Left lung (tissue), 14 donors: ENCODE measurements at regions of chr10 and their contacts with region 1.

Region 1: DNA sequence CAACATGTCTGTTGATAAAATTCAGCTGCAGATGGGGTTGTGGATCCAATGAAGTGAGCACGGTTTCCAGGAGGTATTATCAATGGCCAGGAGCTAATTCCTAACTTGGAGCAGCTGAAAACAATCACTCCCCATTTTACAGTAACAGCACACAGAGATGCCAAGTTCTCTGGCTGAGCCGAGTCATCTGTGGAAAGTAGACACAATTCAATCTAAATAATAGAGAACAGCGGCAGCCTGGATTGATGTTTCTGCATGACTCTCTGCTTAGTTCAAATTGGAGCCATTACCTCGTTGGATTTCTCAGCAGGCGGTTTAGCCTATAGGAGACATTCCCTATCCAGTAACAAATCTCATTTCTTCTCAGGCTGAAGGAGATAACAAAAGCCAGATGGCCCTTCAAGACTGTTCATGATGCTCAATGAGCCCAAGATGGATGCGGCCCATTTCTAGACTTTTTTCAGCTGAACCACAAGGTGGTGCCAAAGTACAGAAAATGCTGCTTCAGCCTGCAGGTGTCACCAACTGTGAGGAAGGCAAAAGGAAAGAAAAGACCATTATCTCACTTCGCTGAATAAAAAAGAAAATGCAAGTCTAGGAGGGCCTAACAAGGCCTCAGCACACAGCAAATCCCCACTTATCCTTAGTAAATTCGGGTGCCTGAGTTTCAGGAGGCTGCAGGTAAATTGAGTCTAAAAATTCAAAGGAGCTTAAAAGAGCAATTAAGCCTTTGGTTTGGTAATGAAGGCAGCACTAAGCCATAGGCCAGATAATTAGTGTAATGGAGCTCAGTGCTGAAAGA is 83.7 kb downstream of the SLC16A9 start:
- DNase-seq: peak in 2 of 4 donors; percentile 73 to 83
- ATAC-seq: peak; percentile 94
- H3K4me3 ChIP-seq: no peak overlapping the region
- H3K27ac ChIP-seq: no peak overlapping the region
- H3K4me1 ChIP-seq: no peaks in the 10 kb centered on the region
- H3K27me3 ChIP-seq: no peaks in the 10 kb centered on the region
- CTCF ChIP-seq: peak; percentile 70 to 71

Region 2: DNA sequence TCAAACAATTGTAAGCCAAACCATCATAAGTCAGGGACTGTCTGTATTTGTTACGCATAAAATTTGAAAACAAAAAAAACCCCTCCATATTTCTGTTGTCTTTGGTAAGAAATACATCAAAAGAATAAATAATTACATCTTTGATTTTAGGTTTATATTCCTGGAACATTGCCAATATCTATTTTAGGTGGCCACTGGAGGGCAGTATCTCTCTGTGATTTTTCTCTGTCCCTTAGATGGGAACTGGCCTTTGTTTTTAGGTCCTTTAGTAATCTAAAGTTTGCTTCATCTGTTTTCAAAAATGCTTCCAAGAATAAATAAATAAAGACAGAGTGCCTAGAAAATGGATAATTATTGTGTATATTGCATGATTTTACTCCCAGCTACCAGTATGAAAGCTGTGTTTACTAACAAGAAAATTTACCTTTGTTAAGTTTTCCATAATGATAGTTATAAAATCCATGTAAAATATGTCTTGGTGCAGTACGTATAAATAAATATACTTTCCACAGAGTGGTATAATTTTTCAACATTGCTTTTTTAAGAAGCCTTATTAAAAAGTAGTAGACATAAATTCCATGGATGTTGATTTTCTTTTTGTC is 385.2 kb before region 1 on chr10:
- intact Hi-C with region 1: loop called in 1 of 2 experiments (anchors 10 kb)
- DNase-seq: peak in 2 of 4 donors; percentile 52 to 58
- ATAC-seq: peak; percentile 52
- H3K4me3 ChIP-seq: no peak overlapping the region
- H3K27ac ChIP-seq: no peak overlapping the region
- H3K4me1 ChIP-seq: no peaks in the 10 kb centered on the region
- H3K27me3 ChIP-seq: no peaks in the 10 kb centered on the region
- CTCF ChIP-seq: peak in 1 of 2 donors; percentile 52

Region 3: GRCh38 chr10:60032723-60033122 is 406.8 kb after region 1 on chr10:
- intact Hi-C with region 1: loop called in 1 of 2 experiments (anchors 10 kb)
- DNase-seq: peak in 2 of 4 donors; percentile 40 to 54
- ATAC-seq: peak; percentile 93
- H3K4me3 ChIP-seq: no peak overlapping the region
- H3K27ac ChIP-seq: no peak overlapping the region
- H3K4me1 ChIP-seq: peaks cover 0 to 13% of the 10 kb centered on the region in 2 donors
- H3K27me3 ChIP-seq: no peaks in the 10 kb centered on the region
- CTCF ChIP-seq: peak; percentile 33 to 38